Heart left ventricle (tissue), 16 donors: ENCODE measurements at regions of chr16 and their contacts with region 1.

Region 1: GRCh38 chr16:49281843-49282642 is 405 bp upstream of the CBLN1 start:
- DNase-seq: peak; percentile 84 to 93 (median 87)
- ATAC-seq: peak; percentile 88 to 99 (median 98)
- H3K4me3 ChIP-seq: peak overlapping the region; percentile 18 to 66 (median 52)
- H3K27ac ChIP-seq: peak overlapping the region in 2 of 12 donors; percentile 50 to 54
- H3K4me1 ChIP-seq: peaks cover 0 to 63% (median 22%) of the 10 kb centered on the region in 12 donors
- H3K27me3 ChIP-seq: peaks cover 46 to 98% (median 80%) of the 10 kb centered on the region in 9 donors
- CTCF ChIP-seq: peak in 11 of 12 donors; percentile 9 to 52 (median 39)
- POLR2A ChIP-seq: no peak

Region 2: DNA sequence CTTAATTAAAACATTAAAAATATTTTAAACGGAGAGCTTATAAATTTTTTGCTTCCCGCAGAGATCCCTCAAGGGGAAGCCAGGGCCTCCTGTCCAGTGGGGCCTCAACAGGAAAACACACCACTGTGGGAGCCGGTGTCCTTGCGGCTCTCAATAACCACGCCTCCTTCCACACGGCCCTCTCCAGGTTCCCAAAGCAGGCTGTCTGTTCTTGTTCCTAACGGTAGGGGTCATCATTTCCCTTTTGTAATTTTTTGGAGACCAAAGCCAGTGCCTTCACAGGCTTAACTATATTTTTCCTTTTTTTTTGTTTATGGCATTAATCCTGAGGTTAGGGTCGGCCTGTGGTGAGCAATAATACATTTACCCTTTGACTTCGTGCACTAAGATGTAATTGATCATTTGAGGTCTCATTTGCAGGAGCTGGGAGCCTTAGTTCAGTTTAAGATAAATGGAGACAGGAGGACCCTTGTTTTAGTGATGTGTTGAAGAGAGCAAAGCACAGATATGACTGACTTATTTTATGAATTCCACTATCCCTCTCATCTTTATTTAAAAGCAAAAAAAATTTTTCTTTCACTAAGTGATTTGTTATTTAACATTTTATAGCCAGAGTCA is 594.5 kb before region 1 on chr16:
- intact Hi-C with region 1: loop called in 1 of 10 experiments (anchors 5 kb)
- DNase-seq: peak; percentile 27 to 63 (median 42)
- ATAC-seq: peak in 3 of 4 donors; percentile 81 to 84 (median 82)
- H3K4me3 ChIP-seq: no peak overlapping the region
- H3K27ac ChIP-seq: no peak overlapping the region
- H3K4me1 ChIP-seq: peaks cover 0 to 5% (median 0%) of the 10 kb centered on the region in 12 donors
- H3K27me3 ChIP-seq: no peaks in the 10 kb centered on the region
- CTCF ChIP-seq: peak; percentile 65 to 84 (median 73)
- POLR2A ChIP-seq: no peak

Region 3: DNA sequence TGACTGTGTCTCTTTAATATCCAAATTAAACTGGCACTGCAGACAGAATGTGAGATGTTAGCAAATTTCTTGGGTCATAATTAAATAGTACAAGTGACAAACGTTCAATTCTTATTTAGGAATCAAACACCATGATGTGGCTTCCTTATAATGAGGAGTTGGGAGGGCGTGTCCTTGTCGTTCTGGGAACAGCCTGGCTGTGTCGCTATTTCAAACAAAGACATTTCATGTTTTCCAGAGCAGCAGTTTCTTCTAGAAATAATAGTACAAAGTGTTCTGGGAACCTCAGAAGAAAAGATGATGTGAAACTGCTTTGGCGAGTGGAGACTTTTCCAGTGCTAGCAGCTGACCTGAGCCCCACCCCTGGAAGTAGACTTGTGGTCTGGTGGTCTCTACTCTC is 370.3 kb before region 1 on chr16:
- intact Hi-C with region 1: loop called in 1 of 10 experiments (anchors 5 kb)
- DNase-seq: no peak
- ATAC-seq: no peak
- H3K4me3 ChIP-seq: no peak overlapping the region
- H3K27ac ChIP-seq: no peak overlapping the region
- H3K4me1 ChIP-seq: no peaks in the 10 kb centered on the region
- H3K27me3 ChIP-seq: peaks cover 0 to 11% (median 0%) of the 10 kb centered on the region in 9 donors
- CTCF ChIP-seq: peak in 7 of 12 donors; percentile 19 to 40 (median 31)
- POLR2A ChIP-seq: no peak

Region 4: GRCh38 chr16:49019081-49019633 is 262.9 kb before region 1 on chr16:
- intact Hi-C with region 1: loop called in 1 of 10 experiments (anchors 10 kb)
- DNase-seq: peak in 1 of 5 donors; percentile 29
- ATAC-seq: no peak
- H3K4me3 ChIP-seq: no peak overlapping the region
- H3K27ac ChIP-seq: no peak overlapping the region
- H3K4me1 ChIP-seq: peaks cover 0 to 4% (median 0%) of the 10 kb centered on the region in 12 donors
- H3K27me3 ChIP-seq: no peaks in the 10 kb centered on the region
- CTCF ChIP-seq: no peak
- POLR2A ChIP-seq: no peak

Region 5: GRCh38 chr16:49356728-49357488 is 74.9 kb after region 1 on chr16:
- intact Hi-C with region 1: no loop called
- DNase-seq: no peak
- ATAC-seq: no peak
- H3K4me3 ChIP-seq: no peak overlapping the region
- H3K27ac ChIP-seq: no peak overlapping the region
- H3K4me1 ChIP-seq: peaks cover 0 to 5% (median 0%) of the 10 kb centered on the region in 12 donors
- H3K27me3 ChIP-seq: peaks cover 0 to 8% (median 0%) of the 10 kb centered on the region in 9 donors
- CTCF ChIP-seq: no peak
- POLR2A ChIP-seq: no peak